Right cardiac atrium (tissue), 5 donors: ENCODE measurements at regions of chr7 and their contacts with region 1.

Region 1: DNA sequence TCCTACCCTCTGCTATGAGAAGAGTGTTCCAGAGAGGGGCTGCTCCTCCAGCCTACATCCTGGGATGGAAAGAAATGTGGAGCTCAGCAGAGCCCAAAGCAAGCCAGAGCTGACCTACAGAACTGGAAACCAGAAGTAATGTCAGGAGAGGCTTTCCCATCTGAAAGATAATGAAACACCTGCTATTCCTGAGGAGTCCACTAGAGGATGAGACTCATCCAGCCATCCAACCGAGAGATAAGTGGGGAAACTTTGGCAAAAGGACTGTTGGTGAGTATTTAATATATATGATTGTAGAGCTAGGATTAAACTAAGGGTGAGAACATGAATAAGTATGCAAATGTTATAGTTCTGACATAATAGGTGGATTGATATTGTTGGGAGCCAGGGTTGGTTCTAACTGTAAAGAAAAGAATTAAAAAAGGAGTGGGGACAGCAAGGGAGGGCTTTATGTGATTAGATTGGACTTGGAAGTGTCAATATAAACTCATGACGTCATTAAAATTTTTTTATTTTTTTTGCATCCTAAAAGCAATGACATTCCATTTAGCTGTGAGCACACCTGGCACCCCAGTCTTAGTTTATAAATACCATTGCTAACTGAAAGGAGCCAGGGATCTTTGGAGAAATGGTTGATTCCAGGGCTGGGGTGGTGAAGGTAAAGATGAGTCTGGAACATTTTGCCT is 312.8 kb upstream of the NFE2L3 start:
- DNase-seq: no peak
- ATAC-seq: no peak
- H3K4me3 ChIP-seq: no peak overlapping the region
- H3K27ac ChIP-seq: no peak overlapping the region
- H3K4me1 ChIP-seq: peaks cover 3% of the 10 kb centered on the region
- H3K27me3 ChIP-seq: no peaks in the 10 kb centered on the region

Region 2: GRCh38 chr7:25777969-25778708 is 61.1 kb before region 1 on chr7:
- intact Hi-C with region 1: loop called in 1 of 4 experiments (anchors 10 kb)
- DNase-seq: peak in 2 of 3 donors; percentile 53 to 77
- ATAC-seq: no peak
- H3K4me3 ChIP-seq: no peak overlapping the region
- H3K27ac ChIP-seq: no peak overlapping the region
- H3K4me1 ChIP-seq: no peaks in the 10 kb centered on the region
- H3K27me3 ChIP-seq: no peaks in the 10 kb centered on the region